ENCODE measurements at regions of chr10 and their contacts with region 1.

Region 1: DNA sequence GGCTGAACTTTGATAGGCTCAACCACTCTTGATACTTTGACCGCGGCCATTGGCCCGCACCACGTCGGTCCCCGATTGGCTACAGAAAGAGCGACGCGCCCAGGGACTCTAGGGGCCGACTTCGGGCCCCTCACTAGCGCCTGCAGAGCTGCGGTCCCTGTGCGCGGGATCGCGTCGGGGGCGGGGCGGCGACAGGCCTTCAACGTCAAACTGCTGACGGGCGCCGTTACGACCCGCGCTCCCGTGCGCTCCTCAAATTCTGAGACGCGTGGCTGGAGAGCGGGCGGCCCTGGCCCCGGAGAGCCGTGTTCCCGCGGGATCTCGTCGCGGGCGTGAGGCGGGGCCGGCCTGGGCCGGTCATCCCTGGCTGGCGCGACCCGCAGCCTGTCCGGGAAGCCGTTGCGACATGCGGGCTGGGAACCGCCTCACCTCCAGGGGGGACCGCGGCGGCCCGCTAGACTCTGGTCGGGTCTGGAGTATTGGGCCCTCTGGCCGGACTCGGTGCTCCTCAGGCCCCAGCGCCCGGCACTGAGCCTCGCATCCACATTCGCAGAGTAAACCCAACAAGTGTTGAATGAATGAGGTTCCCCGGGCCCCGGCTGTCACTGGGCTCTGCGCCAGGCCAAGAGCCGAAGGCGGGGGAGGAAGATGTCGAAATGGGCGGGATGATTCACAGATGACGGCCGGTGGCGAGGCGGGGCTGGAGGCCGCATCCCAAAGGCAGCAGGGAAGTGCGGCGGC is 644 bp upstream of the SLC25A28 start:
- DNase-seq: peak; percentile 79 to 96 (median 86)
- ATAC-seq: peak; percentile 95
- H3K4me3 ChIP-seq: peak overlapping the region; percentile 80
- H3K27ac ChIP-seq: peak overlapping the region; percentile 99
- H3K4me1 ChIP-seq: peaks cover 12 to 24% of the 10 kb centered on the region in 2 experiments; a peak in 4 of 5 replicates
- H3K27me3 ChIP-seq: no peaks in the 10 kb centered on the region
- CTCF ChIP-seq: no peak
- EP300 ChIP-seq: no peak
- POLR2A ChIP-seq: peak; percentile 86
- RAD21 ChIP-seq: no peak

Region 2: GRCh38 chr10:99582255-99582770 is 38.6 kb before region 1 on chr10:
- CTCF ChIA-PET with region 1: no interaction called
- POLR2A ChIA-PET with region 1: no interaction called
- in situ Hi-C with region 1: no loop called
- intact Hi-C with region 1: no loop called
- DNase-seq: no peak
- ATAC-seq: no peak
- H3K4me3 ChIP-seq: no peak overlapping the region
- H3K27ac ChIP-seq: no peak overlapping the region
- H3K4me1 ChIP-seq: 0 out of 5 replicates have a peak, but pooled peaks cover 0 to 2% of the 10 kb centered on the region in 2 experiments
- H3K27me3 ChIP-seq: peaks cover 16 to 43% of the 10 kb centered on the region in 2 experiments; a peak in 4 of 5 replicates
- CTCF ChIP-seq: no peak
- EP300 ChIP-seq: no peak
- POLR2A ChIP-seq: no peak
- RAD21 ChIP-seq: no peak

Region 3: DNA sequence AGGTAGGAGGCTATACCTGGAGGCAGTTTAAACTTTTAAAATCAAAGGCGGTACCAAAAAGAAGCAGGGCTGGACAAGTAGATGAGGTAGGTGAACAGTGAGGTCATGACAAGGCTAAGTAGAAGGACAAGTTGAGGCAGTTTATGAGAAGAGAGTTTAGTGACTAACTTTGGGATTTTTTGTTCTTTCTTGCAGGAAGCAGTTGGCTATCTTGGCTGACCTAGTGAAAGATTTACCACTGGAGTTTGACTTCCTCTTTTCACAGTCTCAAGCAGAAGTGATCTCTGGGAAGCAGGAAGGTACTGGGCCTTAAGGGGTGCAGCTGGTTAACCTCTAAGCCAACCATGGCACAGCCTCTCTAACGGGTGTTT is 64.7 kb after region 1 on chr10:
- CTCF ChIA-PET with region 1: no interaction called
- POLR2A ChIA-PET with region 1: no interaction called
- in situ Hi-C with region 1: no loop called
- intact Hi-C with region 1: loop called (anchors 1 kb)
- DNase-seq: peak in 2 of 4 experiments; percentile 21 to 50
- ATAC-seq: peak; percentile 83
- H3K4me3 ChIP-seq: no peak overlapping the region
- H3K27ac ChIP-seq: peak overlapping the region; percentile 72; the same call in 2 of the 3 replicates
- H3K4me1 ChIP-seq: peaks cover 0 to 5% of the 10 kb centered on the region in 2 experiments; a peak in 3 of 5 replicates
- H3K27me3 ChIP-seq: no peaks in the 10 kb centered on the region
- CTCF ChIP-seq: no peak
- EP300 ChIP-seq: no peak
- POLR2A ChIP-seq: no peak
- RAD21 ChIP-seq: no peak

Region 4: GRCh38 chr10:99698504-99699080 is 77.7 kb after region 1 on chr10:
- CTCF ChIA-PET with region 1: no interaction called
- POLR2A ChIA-PET with region 1: no interaction called
- in situ Hi-C with region 1: no loop called
- intact Hi-C with region 1: no loop called
- DNase-seq: no peak
- ATAC-seq: no peak
- H3K4me3 ChIP-seq: no peak overlapping the region
- H3K27ac ChIP-seq: no peak overlapping the region
- H3K4me1 ChIP-seq: no peaks in the 10 kb centered on the region
- H3K27me3 ChIP-seq: no peaks in the 10 kb centered on the region
- CTCF ChIP-seq: no peak; a peak in 1 of 6 replicates
- EP300 ChIP-seq: no peak
- POLR2A ChIP-seq: no peak
- RAD21 ChIP-seq: no peak

Region 5: GRCh38 chr10:99788598-99789256 is 167.8 kb after region 1 on chr10:
- CTCF ChIA-PET with region 1: no interaction called
- POLR2A ChIA-PET with region 1: no interaction called
- in situ Hi-C with region 1: no loop called
- intact Hi-C with region 1: no loop called
- DNase-seq: no peak
- ATAC-seq: no peak
- H3K4me3 ChIP-seq: no peak overlapping the region
- H3K27ac ChIP-seq: no peak overlapping the region
- H3K4me1 ChIP-seq: peaks cover 6 to 12% of the 10 kb centered on the region in 2 experiments; a peak in 3 of 5 replicates
- H3K27me3 ChIP-seq: peaks cover 5 to 7% of the 10 kb centered on the region in 2 experiments; a peak in 4 of 5 replicates
- CTCF ChIP-seq: no peak
- EP300 ChIP-seq: no peak
- POLR2A ChIP-seq: no peak
- RAD21 ChIP-seq: no peak